Lower leg skin (tissue), 4 donors: ENCODE measurements at regions of chr3 and their contacts with region 1.

Region 1: GRCh38 chr3:159884661-159885402 is 103.8 kb upstream of the IL12A start:
- DNase-seq: no peak
- H3K4me3 ChIP-seq: no peak overlapping the region
- CTCF ChIP-seq: no peak
- POLR2A ChIP-seq: no peak

Region 2: GRCh38 chr3:160003520-160004128 is 118.8 kb after region 1 on chr3:
- intact Hi-C with region 1: loop called (anchors 10 kb)
- DNase-seq: peak in 1 of 2 donors; percentile 72
- H3K4me3 ChIP-seq: no peak overlapping the region
- CTCF ChIP-seq: no peak
- POLR2A ChIP-seq: no peak

Region 3: GRCh38 chr3:160114355-160114995 is 229.6 kb after region 1 on chr3:
- intact Hi-C with region 1: no loop called
- DNase-seq: no peak
- H3K4me3 ChIP-seq: no peak overlapping the region
- CTCF ChIP-seq: no peak
- POLR2A ChIP-seq: no peak